ENCODE measurements at regions of chr7 and their contacts with region 1.

Region 1: DNA sequence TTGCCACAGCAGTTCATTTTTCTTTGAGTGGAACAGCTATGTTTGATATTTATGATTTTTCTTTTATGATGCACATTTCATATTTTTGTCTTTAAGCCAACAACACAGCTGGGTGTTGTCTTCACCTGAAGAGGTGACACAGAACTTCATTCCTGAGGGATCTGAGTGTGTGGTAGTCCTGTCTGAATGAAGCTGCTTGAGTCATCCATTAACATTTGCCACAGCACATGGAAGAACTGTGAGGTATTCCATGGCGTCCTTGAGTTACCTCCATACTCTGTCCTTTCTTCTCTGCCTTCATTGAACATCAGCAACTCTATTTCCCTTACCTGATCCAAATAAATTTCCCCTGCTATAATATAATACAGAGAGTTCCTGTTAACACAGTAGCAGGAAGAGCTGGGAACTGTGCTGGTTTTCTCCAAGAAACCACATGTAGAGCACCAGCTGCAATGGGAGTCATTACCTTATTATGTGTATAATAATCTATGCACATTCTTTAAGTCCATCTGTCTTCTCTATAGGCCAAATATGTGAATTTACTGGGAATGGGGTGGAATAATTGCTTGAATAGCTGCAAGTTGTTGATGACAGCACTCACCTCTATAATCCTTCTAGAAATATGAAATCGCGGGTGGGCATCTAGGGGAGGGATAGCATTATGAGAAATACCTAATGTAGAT is 72.4 kb upstream of the TAC1 start:
- DNase-seq: no peak

Region 2: GRCh38 chr7:97680622-97681021 is 21.1 kb after region 1 on chr7:
- intact Hi-C with region 1: loop called in 1 of 2 experiments (anchors 1 kb)
- DNase-seq: no peak